ENCODE measurements at regions of chr1 and their contacts with region 1.

Region 1: DNA sequence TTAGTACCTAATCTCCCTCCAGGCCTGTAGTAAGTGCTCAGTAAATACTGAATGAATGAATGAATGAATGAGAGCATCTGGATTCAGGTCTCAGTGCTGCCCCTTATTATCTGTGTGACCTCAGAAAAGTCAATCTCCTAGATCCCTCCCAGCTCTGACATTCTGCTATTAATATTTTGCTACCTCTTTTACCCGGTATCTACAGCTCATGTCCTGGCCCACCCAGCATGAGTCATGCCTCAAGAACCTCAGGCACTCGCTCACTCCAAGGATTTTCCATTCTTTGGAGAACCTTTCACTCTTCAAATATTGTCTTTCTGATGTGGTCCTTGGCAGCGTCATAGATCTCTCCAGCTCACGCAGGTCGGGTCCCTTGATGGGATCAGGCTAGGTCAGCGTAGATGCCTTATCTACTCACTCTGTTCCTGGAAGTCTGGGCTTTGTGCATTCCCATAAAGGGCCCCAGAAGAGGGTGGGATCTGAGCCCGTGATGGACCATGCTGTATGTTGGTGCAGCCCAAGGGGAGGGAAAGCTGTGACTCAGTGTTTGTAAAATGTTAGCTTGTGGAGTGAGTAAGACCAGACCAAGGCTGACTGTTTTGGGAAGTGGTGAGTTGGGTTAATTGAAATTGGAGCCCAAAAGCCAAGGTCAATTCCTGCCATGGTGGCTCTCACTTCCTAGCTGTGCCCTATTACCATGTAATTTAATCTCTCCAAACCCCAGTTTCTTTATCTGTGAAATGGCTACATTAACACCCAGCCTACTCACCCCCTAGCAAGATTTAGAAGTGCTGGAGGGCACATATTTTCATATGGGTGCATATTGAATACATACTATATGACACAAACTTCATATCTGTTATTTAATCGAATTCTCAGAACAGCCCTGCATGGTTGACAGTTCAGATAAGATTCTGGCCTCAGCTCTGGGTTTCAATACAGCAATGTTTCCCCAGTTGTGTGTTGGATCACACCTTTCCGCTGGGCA is 214.1 kb upstream of the USP24 start:
- DNase-seq: peak; percentile 100
- ATAC-seq: peak; percentile 95
- H3K4me3 ChIP-seq: peak overlapping the region in 1 of 2 experiments; percentile 27; a peak in 3 of 4 replicates
- H3K27ac ChIP-seq: peak overlapping the region; percentile 51
- H3K4me1 ChIP-seq: peaks cover 22 to 64% of the 10 kb centered on the region in 2 experiments
- H3K27me3 ChIP-seq: no peaks in the 10 kb centered on the region
- CTCF ChIP-seq: no peak
- POLR2A ChIP-seq: no peak
- RAD21 ChIP-seq: peak; percentile 35; the same call in 1 of the 2 replicates

Region 2: GRCh38 chr1:55472784-55473183 is 43.5 kb after region 1 on chr1:
- CTCF ChIA-PET with region 1: no interaction called
- POLR2A ChIA-PET with region 1: interaction called, 3 read pairs
- RAD21 ChIA-PET with region 1: no interaction called
- intact Hi-C with region 1: loop called (anchors 2 kb)
- DNase-seq: peak; percentile 63
- ATAC-seq: peak; percentile 80
- H3K4me3 ChIP-seq: no peak overlapping the region
- H3K27ac ChIP-seq: no peak overlapping the region
- H3K4me1 ChIP-seq: peaks cover 13 to 31% of the 10 kb centered on the region in 2 experiments; a peak in 3 of 4 replicates
- H3K27me3 ChIP-seq: no peaks in the 10 kb centered on the region
- CTCF ChIP-seq: no peak
- POLR2A ChIP-seq: no peak
- RAD21 ChIP-seq: no peak

Measured in HCT116 (cell line).